ENCODE measurements at regions of chr5 and their contacts with region 1.

Region 1: GRCh38 chr5:53991942-53992341 is 318.4 kb downstream of the ARL15 start:
- DNase-seq: no peak
- H3K4me3 ChIP-seq: no peak overlapping the region
- H3K27ac ChIP-seq: no peak overlapping the region
- H3K4me1 ChIP-seq: no peaks in the 10 kb centered on the region
- H3K27me3 ChIP-seq: no peaks in the 10 kb centered on the region
- CTCF ChIP-seq: peak in 1 of 3 experiments; percentile 8

Region 2: GRCh38 chr5:54159893-54160195 is 167.9 kb after region 1 on chr5:
- intact Hi-C with region 1: loop called (anchors 10 kb)
- DNase-seq: no peak
- H3K4me3 ChIP-seq: peak overlapping the region in 1 of 2 donors; percentile 17
- H3K27ac ChIP-seq: peak overlapping the region; percentile 60 to 68
- H3K4me1 ChIP-seq: peaks cover 0 to 12% of the 10 kb centered on the region in 2 donors
- H3K27me3 ChIP-seq: no peaks in the 10 kb centered on the region
- CTCF ChIP-seq: no peak

Region 3: GRCh38 chr5:54180616-54181015 is 188.7 kb after region 1 on chr5:
- intact Hi-C with region 1: no loop called
- DNase-seq: no peak
- H3K4me3 ChIP-seq: no peak overlapping the region
- H3K27ac ChIP-seq: no peak overlapping the region
- H3K4me1 ChIP-seq: peaks cover 3% of the 10 kb centered on the region in 2 donors
- H3K27me3 ChIP-seq: no peaks in the 10 kb centered on the region
- CTCF ChIP-seq: no peak